Esophagus muscularis mucosa (tissue), 4 donors: ENCODE measurements at regions of chr5 and their contacts with region 1.

Region 1: GRCh38 chr5:176415952-176416924 is at the start of gene CLTB:
- DNase-seq: peak; percentile 96
- H3K4me3 ChIP-seq: peak within 1 kb of the TSS; percentile 71 to 98 (median 95)
- H3K27ac ChIP-seq: peak within 1 kb of the TSS; percentile 86 to 98 (median 96)
- H3K4me1 ChIP-seq: peaks cover 44 to 52% (median 50%) of the 10 kb centered on the region in 4 donors
- H3K27me3 ChIP-seq: no peaks in the 10 kb centered on the region
- CTCF ChIP-seq: peak; percentile 80 to 96 (median 83)
- EP300 ChIP-seq: no peak
- POLR2A ChIP-seq: no peak
- total RNA-seq, gene CLTB: 220 to 267 (median 239) TPM

Region 2: DNA sequence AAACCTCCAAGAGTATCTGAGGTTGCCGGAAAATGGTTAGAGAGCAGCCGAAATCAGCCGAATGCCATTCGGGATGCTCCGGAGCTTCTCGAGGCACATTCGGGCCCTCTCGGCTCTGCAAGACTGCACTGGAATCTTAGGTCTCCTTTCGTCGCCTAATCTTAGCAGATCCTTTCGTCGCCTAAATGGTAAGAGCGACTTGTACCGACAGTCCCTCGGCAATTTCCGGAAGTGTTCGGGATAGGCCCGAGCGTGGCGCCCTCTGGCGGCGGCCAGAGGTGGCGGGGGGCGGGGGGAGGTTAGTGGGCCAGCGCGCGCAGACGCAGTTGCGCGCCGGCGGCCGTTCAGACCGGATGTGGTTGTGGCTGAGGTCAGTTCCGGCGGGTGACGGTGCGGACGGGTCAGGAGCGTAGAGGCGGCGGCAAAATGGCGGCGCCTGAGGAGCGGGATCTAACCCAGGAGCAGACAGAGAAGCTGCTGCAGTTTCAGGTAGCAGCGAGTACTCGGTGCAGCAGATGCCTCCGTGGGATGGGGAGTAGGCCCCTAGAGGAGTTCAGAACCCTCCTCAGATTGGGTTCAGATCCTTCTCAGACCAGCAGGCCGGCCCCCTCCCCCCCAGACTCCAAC is 31.9 kb after region 1 on chr5 and contains the start of gene FAF2:
- intact Hi-C with region 1: loop called (anchors 1 kb)
- DNase-seq: peak; percentile 100
- H3K4me3 ChIP-seq: peak within 1 kb of the TSS; percentile 85 to 97 (median 88)
- H3K27ac ChIP-seq: peak within 1 kb of the TSS; percentile 95 to 99 (median 96)
- H3K4me1 ChIP-seq: peaks cover 26 to 48% (median 42%) of the 10 kb centered on the region in 4 donors
- H3K27me3 ChIP-seq: no peaks in the 10 kb centered on the region
- CTCF ChIP-seq: peak in 2 of 3 experiments; percentile 98 to 99
- EP300 ChIP-seq: no peak
- POLR2A ChIP-seq: peak; percentile 81
- total RNA-seq, gene FAF2: 21.2 to 27.3 (median 23.9) TPM

Region 3: GRCh38 chr5:176596689-176597416 is 180.6 kb after region 1 on chr5:
- intact Hi-C with region 1: no loop called
- DNase-seq: no peak
- H3K4me3 ChIP-seq: peak overlapping the region; percentile 45 to 58 (median 48)
- H3K27ac ChIP-seq: no peak overlapping the region
- H3K4me1 ChIP-seq: peaks cover 4 to 17% (median 12%) of the 10 kb centered on the region in 4 donors
- H3K27me3 ChIP-seq: peaks cover 0 to 65% (median 0%) of the 10 kb centered on the region in 4 donors
- CTCF ChIP-seq: peak in 1 of 3 experiments; percentile 15
- EP300 ChIP-seq: no peak
- POLR2A ChIP-seq: no peak

Region 4: DNA sequence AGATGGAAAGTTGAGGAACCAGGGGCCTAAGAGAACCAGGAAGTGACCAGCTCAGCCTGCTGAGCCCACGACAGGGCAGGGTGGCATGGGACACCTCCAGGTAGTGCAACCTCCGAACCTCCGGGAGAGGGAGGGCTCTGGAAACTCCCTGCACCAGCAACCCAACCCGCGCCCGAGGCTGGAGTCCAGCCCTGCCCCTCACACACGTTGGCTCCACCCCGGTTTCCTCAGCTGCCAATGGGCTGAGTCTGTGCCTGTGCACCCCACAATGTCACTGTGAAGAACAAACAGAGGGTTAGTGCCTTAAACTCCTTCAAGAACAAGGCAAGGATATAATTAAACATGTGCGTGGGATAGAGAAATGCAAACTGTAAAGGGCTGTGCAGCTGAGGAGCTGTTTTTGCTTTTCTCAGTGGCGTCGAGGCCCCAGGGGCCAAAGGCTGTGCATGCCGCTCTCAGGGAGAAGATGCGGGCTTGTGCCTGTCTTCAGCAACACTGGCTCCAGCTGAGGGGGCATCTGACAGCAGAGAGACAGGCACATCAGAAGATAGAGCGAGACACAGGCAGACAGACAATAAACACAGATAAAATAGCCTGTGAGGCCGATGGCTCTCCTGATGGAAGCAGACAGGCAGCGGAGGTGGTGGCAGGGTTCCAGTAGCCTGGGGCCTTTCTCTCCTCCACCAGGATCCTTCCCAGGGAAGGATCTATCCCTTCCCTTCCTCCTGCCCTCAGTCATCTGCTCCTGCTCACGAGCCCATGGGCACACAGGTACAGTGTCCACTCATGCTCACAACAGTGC is 377.3 kb after region 1 on chr5:
- intact Hi-C with region 1: no loop called
- DNase-seq: no peak
- H3K4me3 ChIP-seq: no peak overlapping the region
- H3K27ac ChIP-seq: no peak overlapping the region
- H3K4me1 ChIP-seq: no peaks in the 10 kb centered on the region
- H3K27me3 ChIP-seq: peaks cover 0 to 96% (median 15%) of the 10 kb centered on the region in 4 donors
- CTCF ChIP-seq: no peak
- EP300 ChIP-seq: no peak
- POLR2A ChIP-seq: no peak